ENCODE measurements at regions of chr11 and their contacts with region 1.

Region 1: GRCh38 chr11:27698872-27699474 is 1.3 kb downstream of the BDNF start:
- DNase-seq: peak; percentile 23
- ATAC-seq: peak; percentile 88
- H3K4me3 ChIP-seq: no peak overlapping the region
- H3K27ac ChIP-seq: no peak overlapping the region
- H3K4me1 ChIP-seq: no peaks in the 10 kb centered on the region; the same call in 1 of the 2 replicates
- H3K27me3 ChIP-seq: peaks cover 6 to 22% of the 10 kb centered on the region in 2 experiments
- CTCF ChIP-seq: peak; percentile 55 to 96 (median 86)
- EP300 ChIP-seq: no peak
- POLR2A ChIP-seq: no peak
- RAD21 ChIP-seq: peak; percentile 89

Region 2: GRCh38 chr11:27916541-27917100 is 217.6 kb after region 1 on chr11:
- CTCF ChIA-PET with region 1: no interaction called
- POLR2A ChIA-PET with region 1: no interaction called
- RAD21 ChIA-PET with region 1: no interaction called
- SMC1A ChIA-PET with region 1: no interaction called
- in situ Hi-C with region 1: no loop called
- intact Hi-C with region 1: loop called (anchors 5 kb)
- DNase-seq: peak; percentile 89
- ATAC-seq: peak; percentile 92
- H3K4me3 ChIP-seq: no peak overlapping the region
- H3K27ac ChIP-seq: peak overlapping the region; percentile 22
- H3K4me1 ChIP-seq: peaks cover 9% of the 10 kb centered on the region; the same call in 1 of the 2 replicates
- H3K27me3 ChIP-seq: no peaks in the 10 kb centered on the region
- CTCF ChIP-seq: no peak
- EP300 ChIP-seq: peak; percentile 78 to 87; a peak in 3 of 4 replicates
- POLR2A ChIP-seq: no peak
- RAD21 ChIP-seq: no peak

Region 3: GRCh38 chr11:28529540-28530410 is 830.8 kb after region 1 on chr11:
- CTCF ChIA-PET with region 1: interaction called, 114 read pairs
- POLR2A ChIA-PET with region 1: no interaction called
- RAD21 ChIA-PET with region 1: interaction called, 72 read pairs
- SMC1A ChIA-PET with region 1: interaction called, 48 read pairs
- in situ Hi-C with region 1: loop called (anchors 5 kb)
- intact Hi-C with region 1: loop called (anchors 1 kb)
- DNase-seq: no peak
- ATAC-seq: peak; percentile 70
- H3K4me3 ChIP-seq: no peak overlapping the region
- H3K27ac ChIP-seq: no peak overlapping the region
- H3K4me1 ChIP-seq: no peaks in the 10 kb centered on the region
- H3K27me3 ChIP-seq: no peaks in the 10 kb centered on the region
- CTCF ChIP-seq: peak; percentile 21 to 46 (median 28); a peak in 4 of 6 replicates
- EP300 ChIP-seq: no peak
- POLR2A ChIP-seq: no peak
- RAD21 ChIP-seq: peak; percentile 62

Region 4: GRCh38 chr11:28674433-28675103 is 975.6 kb after region 1 on chr11:
- CTCF ChIA-PET with region 1: interaction called, 27 read pairs
- POLR2A ChIA-PET with region 1: no interaction called
- RAD21 ChIA-PET with region 1: interaction called, 8 read pairs
- SMC1A ChIA-PET with region 1: interaction called, 6 read pairs
- in situ Hi-C with region 1: no loop called
- intact Hi-C with region 1: loop called (anchors 1 kb)
- DNase-seq: no peak
- ATAC-seq: peak; percentile 92
- H3K4me3 ChIP-seq: no peak overlapping the region
- H3K27ac ChIP-seq: no peak overlapping the region
- H3K4me1 ChIP-seq: no peaks in the 10 kb centered on the region
- H3K27me3 ChIP-seq: no peaks in the 10 kb centered on the region
- CTCF ChIP-seq: peak; percentile 35 to 51 (median 45); a peak in 3 of 6 replicates
- EP300 ChIP-seq: no peak
- POLR2A ChIP-seq: no peak
- RAD21 ChIP-seq: peak; percentile 10; the same call in 1 of the 2 replicates

Region 5: DNA sequence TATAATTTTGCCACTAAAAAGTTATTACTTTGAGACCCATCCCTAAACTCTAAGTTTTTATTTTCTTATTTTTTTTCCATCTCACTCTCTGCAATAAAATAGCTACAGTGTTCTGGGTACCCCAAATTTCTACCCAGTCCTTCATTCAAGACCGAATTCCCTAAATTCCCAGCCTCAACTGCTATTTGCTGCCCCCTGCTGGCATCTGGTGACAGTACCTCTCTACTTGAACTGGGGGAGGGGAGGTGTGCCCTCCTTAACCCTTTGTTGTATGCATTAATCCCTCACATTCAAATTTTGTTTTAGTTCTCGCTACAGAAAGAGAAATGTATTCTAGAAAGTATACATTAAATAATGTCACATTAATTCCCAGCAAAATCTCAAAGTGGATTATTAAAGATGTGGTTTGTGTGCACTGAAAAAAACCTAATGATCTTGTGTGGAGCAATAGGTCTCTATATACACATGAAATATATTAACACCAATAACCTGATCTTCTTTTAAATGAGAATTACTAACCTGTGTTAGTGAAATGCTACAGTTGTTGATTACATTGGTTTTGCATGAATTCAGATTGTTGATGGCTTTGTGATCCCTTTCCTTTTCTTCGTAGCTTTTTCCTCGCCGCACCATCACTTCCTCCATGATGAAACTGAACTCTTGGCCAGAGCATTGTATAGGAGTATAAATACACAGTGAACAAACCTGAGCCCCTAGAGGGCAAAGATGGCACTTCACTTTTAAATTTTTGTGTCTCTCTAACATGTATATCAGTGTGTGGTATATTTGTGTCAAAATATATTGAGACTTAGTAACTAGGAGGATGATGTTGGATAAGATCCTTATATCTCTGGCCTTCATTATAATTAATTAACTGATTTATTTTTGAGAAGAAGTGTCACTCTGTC is 999.2 kb after region 1 on chr11:
- CTCF ChIA-PET with region 1: interaction called, 30 read pairs
- POLR2A ChIA-PET with region 1: interaction called, 3 read pairs
- RAD21 ChIA-PET with region 1: interaction called, 53 read pairs
- SMC1A ChIA-PET with region 1: interaction called, 15 read pairs
- in situ Hi-C with region 1: loop called (anchors 5 kb)
- intact Hi-C with region 1: loop called (anchors 2 kb)
- DNase-seq: no peak
- ATAC-seq: peak; percentile 80
- H3K4me3 ChIP-seq: no peak overlapping the region
- H3K27ac ChIP-seq: no peak overlapping the region
- H3K4me1 ChIP-seq: no peaks in the 10 kb centered on the region
- H3K27me3 ChIP-seq: no peaks in the 10 kb centered on the region
- CTCF ChIP-seq: peak; percentile 78 to 85 (median 82)
- EP300 ChIP-seq: no peak
- POLR2A ChIP-seq: no peak
- RAD21 ChIP-seq: peak; percentile 72

Region 6: GRCh38 chr11:29019960-29020683 is 1321.1 kb after region 1 on chr11:
- CTCF ChIA-PET with region 1: interaction called, 3 read pairs
- POLR2A ChIA-PET with region 1: no interaction called
- RAD21 ChIA-PET with region 1: no interaction called
- SMC1A ChIA-PET with region 1: no interaction called
- in situ Hi-C with region 1: no loop called
- intact Hi-C with region 1: loop called (anchors 10 kb)
- DNase-seq: no peak
- ATAC-seq: no peak
- H3K4me3 ChIP-seq: no peak overlapping the region
- H3K27ac ChIP-seq: no peak overlapping the region
- H3K4me1 ChIP-seq: no peaks in the 10 kb centered on the region
- H3K27me3 ChIP-seq: no peaks in the 10 kb centered on the region
- CTCF ChIP-seq: peak in 1 of 3 experiments; percentile 12; a peak in 1 of 6 replicates
- EP300 ChIP-seq: no peak
- POLR2A ChIP-seq: no peak
- RAD21 ChIP-seq: no peak

Region 7: DNA sequence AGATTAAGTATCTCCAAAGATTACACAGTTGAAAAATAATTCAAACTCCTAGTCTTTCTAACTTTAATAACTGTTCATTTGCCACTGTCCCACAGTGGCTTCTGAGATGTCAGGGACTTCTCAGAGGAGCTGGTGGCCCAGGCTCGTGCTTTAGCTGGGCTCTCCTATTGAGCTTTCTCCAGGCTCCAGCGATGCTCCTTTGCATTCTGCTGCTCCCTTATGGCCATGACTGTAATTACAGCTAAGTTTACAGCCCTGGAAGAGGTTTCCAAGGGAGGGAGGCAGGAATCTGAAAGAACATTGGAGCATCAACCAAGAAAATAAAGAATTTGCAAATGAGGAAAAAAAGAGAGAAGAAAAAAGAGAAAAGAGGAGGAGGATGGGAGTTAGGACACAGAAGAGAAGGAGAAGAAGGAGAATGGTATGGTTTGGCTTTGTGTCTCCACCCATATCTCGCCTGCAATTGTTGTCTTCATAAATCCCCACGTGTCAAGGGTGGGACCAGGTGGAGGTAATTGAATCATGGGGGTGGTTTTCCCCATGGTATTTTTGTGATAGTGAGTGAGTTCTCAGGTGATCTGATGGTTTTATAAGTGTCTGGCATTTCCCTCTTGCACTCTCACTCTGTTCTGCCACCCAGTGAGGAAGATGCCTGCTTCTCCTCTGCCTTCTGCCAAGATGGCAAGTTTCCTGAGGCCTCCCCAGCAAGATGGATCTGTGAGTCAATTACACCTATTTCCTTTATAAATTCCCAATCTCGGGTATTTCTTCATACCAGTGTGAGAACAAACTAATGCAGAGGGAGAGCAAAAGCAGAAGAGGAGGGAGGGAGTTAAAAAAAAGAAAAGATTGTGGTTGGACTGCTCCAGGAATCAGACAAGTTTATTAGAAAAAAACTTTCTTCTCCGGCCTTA is 1460.8 kb after region 1 on chr11:
- CTCF ChIA-PET with region 1: interaction called, 50 read pairs
- POLR2A ChIA-PET with region 1: no interaction called
- RAD21 ChIA-PET with region 1: interaction called, 31 read pairs
- SMC1A ChIA-PET with region 1: interaction called, 21 read pairs
- in situ Hi-C with region 1: loop called (anchors 10 kb)
- intact Hi-C with region 1: loop called (anchors 1 kb)
- DNase-seq: no peak
- ATAC-seq: peak; percentile 98
- H3K4me3 ChIP-seq: no peak overlapping the region
- H3K27ac ChIP-seq: no peak overlapping the region
- H3K4me1 ChIP-seq: no peaks in the 10 kb centered on the region
- H3K27me3 ChIP-seq: no peaks in the 10 kb centered on the region
- CTCF ChIP-seq: peak; percentile 38 to 64 (median 52); a peak in 5 of 6 replicates
- EP300 ChIP-seq: no peak
- POLR2A ChIP-seq: no peak
- RAD21 ChIP-seq: peak; percentile 72